ENCODE measurements at regions of chr1 and their contacts with region 1.

Region 1: DNA sequence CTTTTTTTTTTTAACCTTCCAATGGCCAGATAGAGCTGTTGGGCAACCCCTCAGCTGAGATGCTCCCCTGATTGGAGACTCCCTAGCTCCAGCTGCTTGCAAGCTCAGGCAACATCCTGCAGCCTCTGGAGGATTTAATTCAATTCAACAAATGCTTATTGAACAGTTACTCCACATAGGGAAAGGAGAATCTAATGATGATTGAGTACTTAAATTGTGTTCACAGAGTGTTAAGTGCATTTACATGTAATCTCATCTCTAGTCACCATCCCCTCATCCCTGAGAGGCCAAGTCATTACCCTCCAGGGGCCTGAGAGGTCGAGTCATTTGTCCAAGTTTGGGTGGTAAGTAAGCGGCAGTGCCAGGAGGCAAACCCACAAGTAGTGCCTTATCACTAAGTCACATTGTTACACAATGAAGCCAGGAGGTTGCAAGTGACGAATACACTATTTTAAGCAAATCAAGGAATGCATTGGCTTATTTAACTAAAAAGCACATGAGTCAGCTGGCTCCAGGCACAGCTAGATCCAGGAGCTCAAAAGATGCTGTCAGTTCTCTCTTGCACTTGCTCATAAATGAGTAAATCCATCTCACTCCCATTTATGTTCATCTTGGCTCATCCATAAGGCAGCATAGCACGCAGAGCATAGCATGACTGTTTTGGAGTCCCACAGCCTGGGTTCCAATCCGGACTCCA is 64.3 kb downstream of the OPTC start:
- DNase-seq: peak in 4 of 5 donors; percentile 56 to 84 (median 73)
- ATAC-seq: peak; percentile 41 to 69 (median 62)
- H3K4me3 ChIP-seq: peak overlapping the region in 4 of 12 donors; percentile 17 to 37 (median 20)
- H3K27ac ChIP-seq: peak overlapping the region; percentile 69 to 98 (median 92)
- H3K4me1 ChIP-seq: peaks cover 0 to 66% (median 39%) of the 10 kb centered on the region in 12 donors
- H3K27me3 ChIP-seq: no peaks in the 10 kb centered on the region
- CTCF ChIP-seq: no peak
- POLR2A ChIP-seq: no peak

Region 2: DNA sequence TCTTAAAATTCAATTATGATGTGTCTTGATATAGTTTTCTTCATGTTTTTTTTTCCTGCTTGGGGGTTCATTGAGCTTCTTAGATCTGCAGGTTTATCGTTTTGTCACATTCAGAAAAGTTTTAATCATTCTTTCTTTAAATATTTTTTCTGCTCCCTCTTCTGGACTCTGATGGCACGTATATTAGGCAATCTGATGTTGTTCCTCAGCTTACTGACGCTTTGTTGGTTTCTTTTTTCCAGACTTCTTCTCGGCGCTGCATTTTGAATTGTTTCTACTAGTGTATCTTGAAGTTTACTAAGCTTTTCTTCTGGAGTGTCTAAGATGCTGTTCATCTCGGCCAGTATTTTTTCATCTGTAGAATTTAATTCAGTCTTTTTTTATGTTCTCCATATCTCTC is 162.5 kb before region 1 on chr1:
- intact Hi-C with region 1: no loop called
- DNase-seq: no peak
- ATAC-seq: no peak
- H3K4me3 ChIP-seq: peak overlapping the region in 1 of 12 donors; percentile 38
- H3K27ac ChIP-seq: no peak overlapping the region
- H3K4me1 ChIP-seq: no peaks in the 10 kb centered on the region
- H3K27me3 ChIP-seq: peaks cover 0 to 2% (median 0%) of the 10 kb centered on the region in 9 donors
- CTCF ChIP-seq: peak in 1 of 12 donors; percentile 17
- POLR2A ChIP-seq: no peak

Region 3: DNA sequence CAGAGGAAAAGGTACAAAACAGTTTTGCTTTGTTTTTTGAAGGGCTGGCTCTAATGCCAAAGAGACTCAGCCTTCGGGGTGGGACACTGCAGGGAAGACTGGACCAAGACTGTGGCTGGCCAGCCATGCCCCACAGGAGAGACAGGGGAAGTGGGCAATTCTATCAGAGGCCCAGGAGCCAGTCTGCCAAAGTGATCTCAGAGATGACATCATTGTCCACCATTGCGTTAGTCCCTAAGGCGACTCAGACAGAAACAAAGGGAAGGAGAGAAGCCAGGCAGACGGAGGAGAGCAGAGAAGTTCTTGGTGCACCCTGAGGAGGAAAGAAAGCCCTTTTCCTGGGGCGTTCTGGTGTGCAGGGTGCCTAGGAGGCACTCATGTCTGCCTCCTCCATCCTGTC is 37.9 kb before region 1 on chr1:
- intact Hi-C with region 1: loop called in 1 of 10 experiments (anchors 5 kb)
- DNase-seq: no peak
- ATAC-seq: no peak
- H3K4me3 ChIP-seq: no peak overlapping the region
- H3K27ac ChIP-seq: no peak overlapping the region
- H3K4me1 ChIP-seq: peaks cover 0 to 44% (median 20%) of the 10 kb centered on the region in 12 donors
- H3K27me3 ChIP-seq: no peaks in the 10 kb centered on the region
- CTCF ChIP-seq: no peak
- POLR2A ChIP-seq: no peak

Region 4: GRCh38 chr1:203597331-203598090 is 39.3 kb after region 1 on chr1:
- intact Hi-C with region 1: loop called in 7 of 10 experiments (anchors 1 to 5 kb)
- DNase-seq: peak in 4 of 5 donors; percentile 52 to 88 (median 74)
- ATAC-seq: peak; percentile 79 to 92 (median 84)
- H3K4me3 ChIP-seq: peak overlapping the region in 2 of 12 donors; percentile 12 to 19
- H3K27ac ChIP-seq: peak overlapping the region; percentile 11 to 89 (median 72)
- H3K4me1 ChIP-seq: peaks cover 0 to 47% (median 27%) of the 10 kb centered on the region in 12 donors
- H3K27me3 ChIP-seq: no peaks in the 10 kb centered on the region
- CTCF ChIP-seq: no peak
- POLR2A ChIP-seq: no peak

Measured in heart left ventricle (tissue), 16 donors.